CD4-positive, alpha-beta T cell (primary cell): ENCODE measurements at regions of chr12 and their contacts with region 1.

Region 1: DNA sequence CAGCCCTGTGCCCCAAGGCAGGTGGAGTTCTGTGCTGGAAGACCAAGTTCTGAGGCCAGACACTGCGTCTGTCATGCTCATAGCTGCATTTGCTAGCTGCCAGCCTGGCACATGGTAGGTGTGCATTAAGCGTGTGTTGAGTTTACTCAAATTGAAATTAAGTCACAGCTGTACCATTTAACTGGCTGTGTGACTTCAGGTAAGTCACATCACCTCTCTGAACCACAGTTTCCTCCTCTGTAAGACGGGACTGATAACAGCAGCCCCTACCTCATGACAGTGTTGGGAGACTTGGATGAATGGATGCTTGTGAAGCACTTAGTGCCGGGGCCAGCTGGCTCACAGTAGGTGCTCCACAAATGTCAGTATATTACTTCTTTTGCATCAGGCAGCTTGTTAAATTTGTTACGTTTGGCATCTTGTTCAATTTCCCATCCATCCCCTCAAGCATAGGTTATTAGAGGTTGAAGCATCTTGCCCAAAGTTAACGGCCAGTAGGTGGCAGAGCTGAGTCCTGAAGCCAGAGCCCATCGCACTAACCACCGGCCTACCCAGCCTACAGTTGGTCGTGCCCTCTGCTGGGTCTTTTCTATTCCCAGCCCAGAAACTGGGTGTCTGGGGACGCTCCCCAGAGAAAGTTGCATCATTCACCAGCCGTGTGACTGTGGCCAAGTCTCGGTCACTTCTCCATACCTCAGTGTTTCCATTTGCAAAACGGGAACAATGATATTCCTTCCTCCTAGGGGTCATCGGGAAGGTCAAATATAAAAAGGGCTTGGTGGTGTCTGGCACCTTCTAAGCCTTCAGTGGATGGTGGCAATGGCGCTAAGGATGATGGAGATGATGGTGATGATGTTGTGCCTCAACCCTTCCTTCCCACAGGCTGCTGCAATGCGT is 4.5 kb downstream of the DAO start:
- DNase-seq: peak; percentile 42 to 82 (median 54)
- ATAC-seq: peak; percentile 61
- H3K4me3 ChIP-seq: no peak overlapping the region
- H3K4me3 Mint-ChIP-seq: no peak overlapping the region
- H3K27ac ChIP-seq: no peak overlapping the region
- H3K27ac Mint-ChIP-seq: no peak overlapping the region
- H3K4me1 ChIP-seq: no peaks in the 10 kb centered on the region
- H3K4me1 Mint-ChIP-seq: no peaks in the 10 kb centered on the region
- H3K27me3 ChIP-seq: no peaks in the 10 kb centered on the region
- H3K27me3 Mint-ChIP-seq: no peaks in the 10 kb centered on the region
- CTCF ChIP-seq: peak; percentile 60

Region 2: GRCh38 chr12:108950991-108951739 is 66.8 kb after region 1 on chr12:
- CTCF ChIA-PET with region 1: interaction called, 3 read pairs
- POLR2A ChIA-PET with region 1: no interaction called
- intact Hi-C with region 1: loop called in 1 of 2 experiments (anchors 1 kb)
- DNase-seq: peak; percentile 47 to 86 (median 59)
- ATAC-seq: peak; percentile 95
- H3K4me3 ChIP-seq: no peak overlapping the region
- H3K4me3 Mint-ChIP-seq: no peak overlapping the region
- H3K27ac ChIP-seq: no peak overlapping the region
- H3K27ac Mint-ChIP-seq: no peak overlapping the region
- H3K4me1 ChIP-seq: peaks cover 4% of the 10 kb centered on the region
- H3K4me1 Mint-ChIP-seq: no peaks in the 10 kb centered on the region
- H3K27me3 ChIP-seq: peaks cover 0 to 3% of the 10 kb centered on the region in 2 experiments
- H3K27me3 Mint-ChIP-seq: peaks cover 24% of the 10 kb centered on the region
- CTCF ChIP-seq: peak; percentile 78

Region 3: DNA sequence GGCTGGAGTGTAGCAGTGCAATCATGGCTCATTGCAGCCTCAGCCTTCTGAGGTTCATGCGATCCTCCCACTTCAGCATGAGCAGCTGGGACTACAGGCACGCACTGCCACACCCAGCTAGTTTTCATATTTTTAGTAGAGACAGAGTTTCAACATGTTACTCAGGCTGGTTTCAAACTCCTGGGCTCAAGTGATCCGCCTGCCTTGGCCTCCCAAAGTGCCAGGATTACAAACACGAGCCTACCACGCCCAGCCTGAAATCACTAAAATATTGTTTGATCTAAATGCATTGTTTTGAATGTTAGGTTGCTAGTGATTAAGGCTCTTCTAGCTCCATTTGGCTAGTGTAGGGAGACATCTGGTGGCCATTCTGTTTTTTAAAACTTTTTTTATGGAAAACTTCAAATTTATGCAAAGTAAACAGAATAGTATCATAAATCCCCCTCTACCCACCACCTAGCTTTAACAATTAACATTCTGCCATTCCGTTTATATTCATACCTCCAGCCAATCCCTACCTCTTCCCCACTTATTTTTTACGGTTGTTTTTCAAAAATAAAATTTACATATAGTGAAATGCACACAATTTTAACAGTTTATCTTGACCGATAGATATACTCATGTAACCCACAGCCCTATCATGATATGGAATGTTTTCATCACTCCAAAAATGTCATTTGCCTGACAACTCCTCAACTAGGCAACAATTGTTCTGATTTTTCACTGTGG is 501.1 kb after region 1 on chr12:
- CTCF ChIA-PET with region 1: no interaction called
- POLR2A ChIA-PET with region 1: no interaction called
- intact Hi-C with region 1: loop called (anchors 10 kb)
- DNase-seq: peak in 3 of 14 experiments; percentile 38 to 41 (median 40)
- ATAC-seq: no peak
- H3K4me3 ChIP-seq: no peak overlapping the region
- H3K4me3 Mint-ChIP-seq: no peak overlapping the region
- H3K27ac ChIP-seq: no peak overlapping the region
- H3K27ac Mint-ChIP-seq: no peak overlapping the region
- H3K4me1 ChIP-seq: no peaks in the 10 kb centered on the region
- H3K4me1 Mint-ChIP-seq: no peaks in the 10 kb centered on the region
- H3K27me3 ChIP-seq: peaks cover 0 to 11% of the 10 kb centered on the region in 2 experiments
- H3K27me3 Mint-ChIP-seq: peaks cover 60% of the 10 kb centered on the region
- CTCF ChIP-seq: peak; percentile 52

Region 4: DNA sequence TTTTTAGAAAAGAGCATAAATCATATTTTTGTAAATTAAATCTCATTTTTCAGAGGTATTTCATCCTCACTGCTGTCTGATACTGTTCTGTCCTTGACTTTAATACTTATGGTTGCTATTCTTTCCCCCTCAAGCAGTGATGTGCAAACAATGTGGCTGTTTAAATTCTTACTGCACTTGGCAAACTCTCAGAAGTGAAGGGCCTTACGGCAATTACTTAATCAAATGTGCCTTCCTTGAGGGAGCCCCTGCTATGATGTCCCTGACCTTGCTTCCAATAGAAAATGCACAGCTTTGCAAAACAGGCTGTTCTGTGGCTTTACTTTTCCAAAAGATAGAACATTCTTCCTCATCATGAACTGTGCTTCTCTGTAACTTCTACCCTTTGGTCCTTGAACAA is 628.2 kb after region 1 on chr12:
- CTCF ChIA-PET with region 1: no interaction called
- POLR2A ChIA-PET with region 1: no interaction called
- intact Hi-C with region 1: no loop called
- DNase-seq: no peak
- ATAC-seq: no peak
- H3K4me3 ChIP-seq: no peak overlapping the region
- H3K4me3 Mint-ChIP-seq: no peak overlapping the region
- H3K27ac ChIP-seq: no peak overlapping the region
- H3K27ac Mint-ChIP-seq: no peak overlapping the region
- H3K4me1 ChIP-seq: no peaks in the 10 kb centered on the region
- H3K4me1 Mint-ChIP-seq: no peaks in the 10 kb centered on the region
- H3K27me3 ChIP-seq: no peaks in the 10 kb centered on the region
- H3K27me3 Mint-ChIP-seq: no peaks in the 10 kb centered on the region
- CTCF ChIP-seq: no peak